ENCODE measurements at regions of chr5 and their contacts with region 1.

Region 1: GRCh38 chr5:53430261-53431252 is 49.9 kb upstream of the FST start:
- H3K4me3 Mint-ChIP-seq: no peak overlapping the region
- H3K27ac Mint-ChIP-seq: no peak overlapping the region
- H3K4me1 Mint-ChIP-seq: no peaks in the 10 kb centered on the region
- H3K27me3 Mint-ChIP-seq: no peaks in the 10 kb centered on the region

Region 2: DNA sequence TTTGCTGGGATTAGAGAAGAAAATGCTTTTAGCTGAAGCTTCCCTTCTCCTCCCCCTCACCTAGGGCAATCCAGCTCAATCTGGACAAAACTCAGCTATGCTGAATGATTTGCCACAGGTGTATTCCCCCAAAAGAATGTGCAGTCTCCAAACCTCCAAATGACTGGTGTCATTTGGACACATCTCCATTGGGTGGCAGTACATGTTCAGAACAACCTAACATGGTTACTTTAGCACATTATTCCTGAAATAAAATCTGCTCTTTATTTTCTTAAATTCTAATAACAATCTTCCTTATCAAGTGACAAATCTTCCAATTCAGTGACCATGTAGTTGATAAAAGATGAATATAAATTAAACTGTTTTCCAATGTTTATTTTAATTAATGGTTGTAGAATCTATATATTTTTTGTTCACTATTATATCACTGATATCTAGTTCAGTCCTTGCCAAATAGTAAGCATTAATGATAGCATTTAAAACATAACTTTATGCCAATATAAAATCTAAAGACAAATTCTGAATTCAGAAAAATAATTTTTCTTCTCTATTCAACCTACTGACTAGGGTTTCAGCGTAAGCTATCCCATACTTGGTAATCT is 259.7 kb before region 1 on chr5:
- intact Hi-C with region 1: loop called (anchors 10 kb)
- H3K4me3 Mint-ChIP-seq: no peak overlapping the region
- H3K27ac Mint-ChIP-seq: no peak overlapping the region
- H3K4me1 Mint-ChIP-seq: peaks cover 34% of the 10 kb centered on the region
- H3K27me3 Mint-ChIP-seq: no peaks in the 10 kb centered on the region

Region 3: GRCh38 chr5:53262348-53262970 is 168.1 kb before region 1 on chr5:
- intact Hi-C with region 1: loop called (anchors 1 kb)
- H3K4me3 Mint-ChIP-seq: no peak overlapping the region
- H3K27ac Mint-ChIP-seq: no peak overlapping the region
- H3K4me1 Mint-ChIP-seq: peaks cover 15% of the 10 kb centered on the region
- H3K27me3 Mint-ChIP-seq: no peaks in the 10 kb centered on the region

Region 4: GRCh38 chr5:53416144-53416744 is 14.3 kb before region 1 on chr5:
- intact Hi-C with region 1: no loop called
- H3K4me3 Mint-ChIP-seq: no peak overlapping the region
- H3K27ac Mint-ChIP-seq: no peak overlapping the region
- H3K4me1 Mint-ChIP-seq: no peaks in the 10 kb centered on the region
- H3K27me3 Mint-ChIP-seq: no peaks in the 10 kb centered on the region

Region 5: DNA sequence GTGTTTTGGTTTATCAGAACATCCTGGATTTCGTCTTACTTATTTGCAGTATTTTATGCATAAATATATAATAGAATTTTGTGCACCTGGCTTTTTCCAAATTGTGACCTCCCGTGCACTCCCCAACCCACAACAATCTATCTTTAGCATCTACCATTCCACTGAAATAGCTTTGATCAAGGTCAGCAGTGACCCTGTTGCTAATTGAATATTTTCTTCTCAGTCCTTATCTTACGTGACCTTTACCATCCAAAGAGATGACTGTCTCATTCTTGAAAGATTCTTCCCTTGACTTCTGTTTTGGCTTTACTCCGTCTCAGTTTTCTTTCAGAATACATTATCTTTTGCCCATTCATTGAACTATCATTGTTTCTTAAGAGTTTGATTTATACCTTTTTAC is 148.3 kb after region 1 on chr5:
- intact Hi-C with region 1: no loop called
- H3K4me3 Mint-ChIP-seq: no peak overlapping the region
- H3K27ac Mint-ChIP-seq: peak overlapping the region; percentile 36
- H3K4me1 Mint-ChIP-seq: peaks cover 17% of the 10 kb centered on the region
- H3K27me3 Mint-ChIP-seq: no peaks in the 10 kb centered on the region

Region 6: GRCh38 chr5:54387659-54388232 is 957.2 kb after region 1 on chr5:
- intact Hi-C with region 1: no loop called
- H3K4me3 Mint-ChIP-seq: no peak overlapping the region
- H3K27ac Mint-ChIP-seq: no peak overlapping the region
- H3K4me1 Mint-ChIP-seq: peaks cover 18% of the 10 kb centered on the region
- H3K27me3 Mint-ChIP-seq: no peaks in the 10 kb centered on the region

Measured in dendritic cell treated with granulocyte-macrophage colony-stimulating factor and Interleukin-4, amounts not matched to agents 40 ng/mL and 50 ng/mL, for 4 days (primary cell).